ENCODE measurements at regions of chr5 and their contacts with region 1.

Region 1: GRCh38 chr5:80672140-80672736 is 17.5 kb upstream of the DHFR start:
- DNase-seq: peak; percentile 81
- H3K4me3 ChIP-seq: no peak overlapping the region
- H3K27ac ChIP-seq: no peak overlapping the region
- H3K4me1 ChIP-seq: peaks cover 0 to 21% (median 0%) of the 10 kb centered on the region in 6 donors
- H3K27me3 ChIP-seq: no peaks in the 10 kb centered on the region
- CTCF ChIP-seq: peak; percentile 53 to 89 (median 81)
- POLR2A ChIP-seq: no peak

Region 2: GRCh38 chr5:80466669-80467485 is 205.4 kb before region 1 on chr5:
- intact Hi-C with region 1: no loop called
- DNase-seq: no peak
- H3K4me3 ChIP-seq: no peak overlapping the region
- H3K27ac ChIP-seq: peak overlapping the region in 3 of 8 donors; percentile 13 to 39 (median 20)
- H3K4me1 ChIP-seq: peaks cover 0 to 15% (median 2%) of the 10 kb centered on the region in 6 donors
- H3K27me3 ChIP-seq: no peaks in the 10 kb centered on the region
- CTCF ChIP-seq: no peak
- POLR2A ChIP-seq: no peak

Region 3: DNA sequence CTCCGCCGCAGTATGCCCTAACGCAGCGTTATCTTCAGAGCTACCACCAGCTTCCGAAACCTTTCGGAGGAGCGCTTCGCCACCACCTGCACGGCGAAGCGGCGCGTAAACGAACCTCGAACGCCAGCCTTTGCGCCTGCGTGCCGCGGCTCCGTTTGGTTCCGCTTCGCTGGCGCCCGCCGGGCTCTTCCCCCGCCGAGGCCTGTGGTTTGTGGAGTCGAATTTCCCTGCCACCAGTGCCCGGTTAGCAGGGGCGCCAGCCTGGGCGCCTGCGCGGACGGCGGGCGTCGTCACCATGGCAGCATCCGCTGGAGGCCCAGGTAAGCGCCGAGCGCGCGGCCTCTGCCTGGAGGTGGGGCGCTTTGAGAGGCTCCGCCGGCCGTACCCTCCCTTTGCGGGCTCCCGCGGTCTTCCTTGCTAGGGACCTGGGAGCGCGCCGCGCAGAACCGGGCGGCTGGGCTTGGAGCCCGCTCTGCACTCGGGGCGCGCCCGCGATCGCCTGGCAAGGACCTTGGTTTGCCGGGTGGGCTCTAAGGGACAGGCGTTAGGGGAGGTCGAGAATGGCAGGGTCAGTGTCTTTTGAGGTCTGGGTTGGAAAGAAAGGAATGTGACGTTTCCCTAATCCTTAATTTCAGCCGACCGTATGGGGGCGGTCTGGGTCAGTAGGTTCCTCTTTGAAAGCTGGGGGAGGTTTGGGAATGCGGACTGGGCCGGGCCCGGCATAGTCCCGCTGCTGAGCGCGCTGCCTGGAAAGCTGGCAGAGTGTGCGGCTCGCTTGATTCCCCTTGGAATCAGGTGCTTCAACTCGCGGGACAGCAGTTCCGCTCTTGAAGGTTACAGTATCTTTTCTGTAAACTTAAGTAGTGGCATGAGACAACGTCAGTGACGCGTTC is 184.2 kb before region 1 on chr5 and contains the start of gene FAM151B:
- intact Hi-C with region 1: loop called (anchors 10 kb)
- DNase-seq: peak; percentile 94
- H3K4me3 ChIP-seq: peak within 1 kb of the TSS; percentile 44 to 83 (median 71)
- H3K27ac ChIP-seq: peak within 1 kb of the TSS; percentile 5 to 89 (median 82)
- H3K4me1 ChIP-seq: peaks cover 0 to 31% (median 19%) of the 10 kb centered on the region in 6 donors
- H3K27me3 ChIP-seq: peaks cover 0 to 18% (median 0%) of the 10 kb centered on the region in 7 donors
- CTCF ChIP-seq: peak in 2 of 11 experiments; percentile 6 to 7
- POLR2A ChIP-seq: no peak
- total RNA-seq, gene FAM151B: 2.0 to 6.6 (median 3.5) TPM

Region 4: GRCh38 chr5:80641353-80641752 is 30.9 kb before region 1 on chr5:
- intact Hi-C with region 1: no loop called
- DNase-seq: no peak
- H3K4me3 ChIP-seq: no peak overlapping the region
- H3K27ac ChIP-seq: no peak overlapping the region
- H3K4me1 ChIP-seq: no peaks in the 10 kb centered on the region
- H3K27me3 ChIP-seq: no peaks in the 10 kb centered on the region
- CTCF ChIP-seq: no peak
- POLR2A ChIP-seq: no peak